HepG2 (cell line): ENCODE measurements at regions of chr3 and their contacts with region 1.

Region 1: DNA sequence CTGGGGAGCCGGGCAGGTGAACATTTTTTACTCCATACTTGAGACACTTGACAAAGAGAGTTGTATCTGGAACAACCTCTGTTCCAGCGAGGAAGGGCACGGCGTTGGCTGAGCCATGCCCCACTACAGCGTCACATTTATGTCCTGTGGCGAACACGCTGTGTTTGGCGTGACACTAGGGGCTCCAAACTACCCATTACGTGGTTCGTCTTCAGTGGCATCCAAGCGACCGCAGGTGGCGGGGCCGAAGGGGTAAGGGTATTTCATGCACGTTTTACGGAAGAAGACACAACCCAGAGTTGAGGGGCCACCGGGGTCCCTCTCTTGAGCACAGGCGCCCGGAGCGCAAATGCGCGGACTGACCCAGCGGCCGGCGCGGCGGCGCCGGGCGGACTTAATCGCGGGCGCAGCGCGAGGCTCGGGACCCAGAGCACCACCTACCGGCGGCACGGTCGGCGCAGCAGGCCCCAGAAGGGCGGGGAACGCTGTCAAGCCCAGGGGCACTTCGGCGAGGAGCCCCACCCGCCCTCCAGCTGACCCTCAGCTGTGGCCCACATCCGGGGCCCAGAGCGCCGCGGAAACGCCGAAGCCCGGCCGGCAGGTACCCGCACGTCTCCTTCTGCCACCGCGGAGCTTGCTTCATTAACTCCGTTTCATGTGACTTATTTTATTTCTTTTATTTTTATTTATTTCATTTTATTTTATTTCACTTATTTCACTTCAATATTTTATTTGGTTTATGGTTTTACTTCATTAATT is 36.4 kb upstream of the TRIM71 start:
- DNase-seq: peak; percentile 83
- ATAC-seq: peak; percentile 85
- H3K4me3 ChIP-seq: peak overlapping the region; percentile 68 to 81 (median 71); a peak in 5 of 6 replicates
- H3K27ac ChIP-seq: peak overlapping the region; percentile 85
- H3K4me1 ChIP-seq: peaks cover 43% of the 10 kb centered on the region
- H3K27me3 ChIP-seq: no peaks in the 10 kb centered on the region; a peak in 1 of 5 replicates
- CTCF ChIP-seq: peak; percentile 90
- EP300 ChIP-seq: peak in 1 of 2 experiments; percentile 51; a peak in 1 of 4 replicates
- POLR2A ChIP-seq: peak; percentile 59 to 72
- RAD21 ChIP-seq: peak; percentile 90

Region 2: DNA sequence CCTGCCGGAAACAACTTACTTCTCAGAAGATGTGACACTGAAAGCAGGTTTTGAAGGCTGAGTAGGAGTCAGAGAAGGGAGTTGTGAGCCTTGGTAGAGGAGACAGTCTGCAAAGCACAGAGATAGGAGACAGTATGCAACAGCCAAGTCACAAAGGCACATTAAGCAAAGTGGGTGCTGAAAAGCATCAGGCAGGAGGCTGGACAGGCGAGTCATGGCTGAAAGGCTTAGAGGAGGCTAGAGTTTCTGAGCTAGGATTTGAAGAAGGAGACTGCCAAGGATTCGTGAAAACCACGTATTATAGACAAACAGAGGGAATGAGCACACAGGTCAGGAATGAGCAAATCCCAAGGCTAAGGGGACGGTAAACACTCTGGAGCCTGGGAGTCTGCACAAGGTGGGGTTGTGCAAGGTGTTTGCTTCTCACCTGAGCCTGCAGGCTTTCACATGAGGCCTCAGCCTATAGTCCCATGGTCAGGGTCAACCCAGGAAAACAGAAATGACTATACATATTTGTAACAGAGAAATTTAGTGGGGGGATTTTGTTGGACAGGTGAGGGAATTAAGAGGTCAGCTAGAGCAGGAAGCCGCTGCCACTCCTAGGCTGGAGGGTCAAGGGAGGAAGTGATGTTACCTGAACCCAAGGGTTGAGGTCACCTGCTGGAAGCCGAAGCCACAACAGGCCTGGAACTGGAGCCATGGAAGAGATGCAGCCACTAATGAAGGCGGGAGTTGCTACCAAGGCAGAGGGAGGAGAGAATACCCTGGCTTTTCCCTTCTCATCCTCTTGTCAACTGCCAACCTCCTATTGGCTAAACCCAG is 13.3 kb after region 1 on chr3:
- CTCF ChIA-PET with region 1: no interaction called
- POLR2A ChIA-PET with region 1: interaction called, 57 read pairs
- in situ Hi-C with region 1: no loop called
- intact Hi-C with region 1: no loop called
- DNase-seq: peak; percentile 97
- ATAC-seq: peak; percentile 97
- H3K4me3 ChIP-seq: peak overlapping the region; percentile 4 to 53 (median 31); a peak in 5 of 6 replicates
- H3K27ac ChIP-seq: peak overlapping the region; percentile 87
- H3K4me1 ChIP-seq: peaks cover 54% of the 10 kb centered on the region
- H3K27me3 ChIP-seq: no peaks in the 10 kb centered on the region
- CTCF ChIP-seq: no peak
- EP300 ChIP-seq: peak; percentile 87 to 97; a peak in 3 of 4 replicates
- POLR2A ChIP-seq: 0 out of 4 replicates have a peak, but pooled peaks of 1 of the 2 experiments have one; percentile 14
- RAD21 ChIP-seq: no peak; the same call in 1 of the 2 replicates

Region 3: DNA sequence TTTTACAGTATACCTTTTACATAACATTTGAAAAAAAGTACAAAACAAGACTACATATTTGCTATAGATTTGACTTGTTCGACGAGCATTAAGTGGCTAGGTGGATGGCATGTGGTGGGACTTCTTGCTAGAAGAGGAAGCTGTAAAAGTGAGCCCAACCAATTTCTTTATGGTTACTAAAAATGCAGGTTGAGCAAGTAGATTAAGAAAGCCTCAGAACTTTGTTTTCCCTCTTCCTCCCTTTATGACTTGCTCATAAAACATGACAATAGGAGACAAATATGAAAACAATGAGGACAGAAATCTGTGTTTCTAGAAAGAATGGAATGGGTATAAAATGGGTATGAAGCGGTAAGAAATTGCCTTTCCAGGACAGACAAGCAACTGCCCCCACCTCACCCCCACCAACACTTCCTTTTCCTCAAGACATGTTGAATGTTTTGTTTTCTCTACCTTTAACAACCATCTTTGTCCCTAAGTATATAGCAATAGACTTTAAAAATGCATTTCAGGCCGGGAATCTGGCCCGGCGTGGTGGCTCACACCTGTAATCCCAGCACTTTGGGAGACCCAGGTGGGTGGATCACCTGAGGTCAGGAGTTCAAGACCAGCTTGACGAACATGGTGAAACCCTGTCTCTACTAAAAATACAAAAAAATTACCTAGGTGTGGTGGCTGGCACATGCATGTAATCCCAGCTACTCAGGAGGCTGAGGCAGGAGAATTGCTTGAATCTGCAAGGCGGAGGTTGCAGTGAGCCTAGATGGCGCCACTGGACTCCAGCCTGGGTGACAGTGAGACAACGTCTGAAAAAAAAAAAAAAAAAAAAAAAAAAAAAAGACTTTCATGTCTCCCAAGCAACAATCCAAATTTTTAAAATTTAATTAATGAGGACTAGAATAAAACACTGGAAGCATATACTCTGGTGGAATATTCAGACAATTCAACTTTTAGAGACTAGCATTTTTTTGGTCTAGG is 120.3 kb after region 1 on chr3:
- CTCF ChIA-PET with region 1: no interaction called
- POLR2A ChIA-PET with region 1: interaction called, 3 read pairs
- in situ Hi-C with region 1: no loop called
- intact Hi-C with region 1: loop called (anchors 2 kb)
- DNase-seq: peak; percentile 51
- ATAC-seq: peak; percentile 41
- H3K4me3 ChIP-seq: peak overlapping the region; percentile 40 to 57 (median 50); a peak in 5 of 6 replicates
- H3K27ac ChIP-seq: peak overlapping the region; percentile 16
- H3K4me1 ChIP-seq: peaks cover 17% of the 10 kb centered on the region
- H3K27me3 ChIP-seq: no peaks in the 10 kb centered on the region
- CTCF ChIP-seq: peak; percentile 55
- EP300 ChIP-seq: no peak
- POLR2A ChIP-seq: no peak
- RAD21 ChIP-seq: no peak

Region 4: DNA sequence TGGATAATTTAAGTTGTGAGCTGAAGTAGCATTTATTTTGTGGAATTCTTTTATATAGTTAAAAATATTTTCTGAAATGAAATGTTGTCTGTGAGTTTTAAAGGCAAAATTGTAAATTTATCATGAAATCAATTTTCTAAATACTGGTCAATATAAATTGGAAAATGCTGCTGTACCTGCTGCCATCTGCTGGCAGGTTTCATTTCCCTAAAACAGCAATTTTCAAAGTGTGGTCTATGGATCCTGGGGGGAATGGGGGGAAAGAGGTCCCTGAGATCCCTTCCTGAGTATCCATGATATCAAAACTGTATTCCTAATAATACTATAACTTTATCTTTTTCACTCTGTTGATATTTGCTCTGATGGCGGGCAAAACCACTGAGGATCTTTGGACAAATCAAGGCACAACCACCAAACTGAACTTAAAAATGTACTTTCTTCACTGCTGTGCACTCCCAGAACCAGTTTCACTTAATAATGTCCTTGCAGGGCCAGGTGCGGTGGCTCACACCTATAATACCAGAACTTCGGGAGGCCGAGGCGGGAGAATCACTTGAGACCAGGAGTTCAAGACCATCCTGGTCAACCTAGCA is 152.9 kb after region 1 on chr3:
- CTCF ChIA-PET with region 1: no interaction called
- POLR2A ChIA-PET with region 1: no interaction called
- in situ Hi-C with region 1: no loop called
- intact Hi-C with region 1: loop called (anchors 1 kb)
- DNase-seq: no peak
- ATAC-seq: peak; percentile 55; the same call in 2 of the 3 replicates
- H3K4me3 ChIP-seq: no peak overlapping the region
- H3K27ac ChIP-seq: no peak overlapping the region
- H3K4me1 ChIP-seq: peaks cover 11% of the 10 kb centered on the region
- H3K27me3 ChIP-seq: no peaks in the 10 kb centered on the region; a peak in 1 of 5 replicates
- CTCF ChIP-seq: peak; percentile 72
- EP300 ChIP-seq: no peak
- POLR2A ChIP-seq: no peak
- RAD21 ChIP-seq: peak; percentile 34; the same call in 1 of the 2 replicates

Region 5: DNA sequence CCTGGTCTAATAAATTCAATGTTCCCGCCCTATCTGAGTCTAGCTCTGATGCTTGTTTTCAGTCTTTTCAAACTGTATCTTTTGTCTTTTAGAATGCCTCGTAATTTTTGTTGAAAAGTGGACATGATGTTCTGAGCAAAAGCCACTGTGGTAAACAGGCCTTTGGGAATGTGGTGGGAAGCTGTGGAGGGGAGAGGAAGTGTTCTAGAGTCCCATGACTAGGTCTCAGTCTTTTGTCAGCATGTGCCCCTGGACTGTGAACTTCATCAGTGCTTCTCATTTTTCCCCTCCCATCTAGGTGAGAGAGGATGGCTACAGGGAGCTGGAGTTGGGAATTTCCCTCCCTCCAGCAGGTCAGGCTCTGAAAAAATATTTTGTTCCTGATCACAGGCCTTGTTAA is 403.5 kb after region 1 on chr3:
- CTCF ChIA-PET with region 1: no interaction called
- POLR2A ChIA-PET with region 1: no interaction called
- in situ Hi-C with region 1: no loop called
- intact Hi-C with region 1: no loop called
- DNase-seq: peak; percentile 70
- ATAC-seq: peak; percentile 74
- H3K4me3 ChIP-seq: no peak overlapping the region
- H3K27ac ChIP-seq: no peak overlapping the region
- H3K4me1 ChIP-seq: peaks cover 54% of the 10 kb centered on the region
- H3K27me3 ChIP-seq: no peaks in the 10 kb centered on the region
- CTCF ChIP-seq: no peak
- EP300 ChIP-seq: no peak
- POLR2A ChIP-seq: no peak
- RAD21 ChIP-seq: no peak